ENCODE measurements at regions of chr5 and their contacts with region 1.

Region 1: GRCh38 chr5:149636851-149637246 is 55.6 kb downstream of the ARHGEF37 start:
- DNase-seq: peak; percentile 89
- H3K4me3 ChIP-seq: no peak overlapping the region
- H3K27ac ChIP-seq: no peak overlapping the region
- H3K4me1 ChIP-seq: peaks cover 4% of the 10 kb centered on the region
- H3K27me3 ChIP-seq: no peaks in the 10 kb centered on the region
- CTCF ChIP-seq: peak; percentile 73 to 88 (median 79)
- POLR2A ChIP-seq: no peak

Region 2: DNA sequence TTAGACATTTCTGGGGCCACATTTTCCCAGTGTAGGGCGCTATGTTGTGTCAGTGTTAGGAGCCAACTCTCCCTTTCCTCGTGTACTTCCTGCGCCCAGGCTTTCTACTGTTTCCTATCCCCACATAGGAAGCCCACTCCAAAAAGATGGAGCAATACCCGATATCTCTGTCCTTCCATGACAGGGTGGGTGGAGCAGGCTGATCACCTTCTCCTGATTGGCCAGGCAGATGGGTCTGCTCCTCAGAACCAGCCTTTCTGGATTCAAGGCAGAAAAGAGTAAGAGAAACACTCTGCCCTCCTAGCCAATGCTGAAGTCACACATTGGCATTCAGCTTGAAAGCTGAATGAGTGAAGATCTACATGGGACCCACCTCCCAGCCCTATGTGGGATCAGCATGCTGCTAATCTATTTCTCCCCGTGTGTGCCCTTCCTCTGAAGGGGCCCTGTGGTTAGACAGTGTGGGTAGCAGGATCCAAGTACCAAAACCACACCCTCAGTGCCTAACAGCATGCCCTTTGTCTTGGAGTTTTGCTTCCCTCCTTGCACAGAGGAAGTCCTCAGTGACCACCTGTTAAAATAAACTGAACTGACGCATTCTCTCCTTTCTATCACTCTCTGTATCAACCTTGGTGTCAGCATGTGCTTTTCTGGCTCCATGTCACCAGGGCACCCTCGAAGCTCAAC is 599.2 kb before region 1 on chr5:
- intact Hi-C with region 1: no loop called
- DNase-seq: no peak
- H3K4me3 ChIP-seq: no peak overlapping the region
- H3K27ac ChIP-seq: no peak overlapping the region
- H3K4me1 ChIP-seq: peaks cover 5% of the 10 kb centered on the region
- H3K27me3 ChIP-seq: no peaks in the 10 kb centered on the region
- CTCF ChIP-seq: no peak
- POLR2A ChIP-seq: no peak

Region 3: DNA sequence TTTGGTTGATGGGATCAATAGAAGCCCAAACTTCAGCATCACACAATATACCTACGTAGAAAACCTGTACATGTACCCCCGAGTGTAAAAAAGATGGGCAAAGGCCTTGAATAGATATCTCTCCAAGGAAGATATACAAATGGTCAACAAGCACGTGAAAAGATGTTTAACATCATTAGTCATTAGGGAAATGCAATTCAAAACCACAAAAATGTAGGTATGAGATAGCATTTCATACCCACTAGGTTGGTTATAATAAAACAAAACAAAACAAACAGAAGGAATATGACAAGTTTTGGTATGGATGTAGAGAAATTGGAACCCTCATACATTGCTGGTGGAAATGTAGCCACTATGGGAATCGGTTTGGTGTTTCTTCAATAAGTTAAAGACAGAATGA is 60.2 kb after region 1 on chr5:
- intact Hi-C with region 1: no loop called
- DNase-seq: no peak
- H3K4me3 ChIP-seq: no peak overlapping the region
- H3K27ac ChIP-seq: no peak overlapping the region
- H3K4me1 ChIP-seq: no peaks in the 10 kb centered on the region
- H3K27me3 ChIP-seq: no peaks in the 10 kb centered on the region
- CTCF ChIP-seq: no peak
- POLR2A ChIP-seq: no peak

Region 4: GRCh38 chr5:149749481-149750365 is 112.9 kb after region 1 on chr5:
- intact Hi-C with region 1: no loop called
- DNase-seq: no peak
- H3K4me3 ChIP-seq: no peak overlapping the region
- H3K27ac ChIP-seq: no peak overlapping the region
- H3K4me1 ChIP-seq: no peaks in the 10 kb centered on the region
- H3K27me3 ChIP-seq: no peaks in the 10 kb centered on the region
- CTCF ChIP-seq: no peak
- POLR2A ChIP-seq: no peak

Region 5: DNA sequence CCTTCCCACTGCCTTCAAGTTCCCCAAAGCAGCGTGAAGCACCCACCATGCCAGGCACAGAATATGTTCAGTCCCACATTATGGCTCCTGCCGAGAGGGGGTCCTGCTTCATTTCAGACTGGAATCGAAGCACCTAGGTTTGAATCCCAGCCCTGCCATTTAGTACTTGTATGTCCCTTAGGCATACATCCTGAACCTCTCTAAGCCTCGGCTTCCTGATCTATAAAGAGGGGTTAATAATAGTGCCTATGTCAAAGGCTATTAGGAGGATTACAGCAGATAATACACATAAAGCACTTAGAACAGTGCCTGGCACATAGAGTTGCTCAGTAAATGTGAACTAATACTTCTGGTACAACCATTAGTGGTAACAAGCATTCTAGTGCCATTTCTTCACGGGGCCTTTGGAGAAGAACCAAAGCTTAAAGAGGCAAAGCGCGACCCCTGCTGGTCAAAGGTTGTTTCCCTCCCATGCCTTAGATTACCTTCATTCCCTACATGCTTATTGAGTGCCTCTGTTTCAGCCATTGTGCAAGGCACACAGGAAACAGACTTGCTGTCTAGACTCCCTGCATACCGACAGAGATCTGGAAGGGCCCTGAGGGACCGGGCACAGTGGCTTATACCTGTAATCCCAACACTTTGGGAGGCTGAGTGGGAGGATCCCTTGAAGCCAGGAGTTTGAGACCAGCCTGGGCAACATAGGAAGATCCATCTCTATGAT is 191.5 kb after region 1 on chr5:
- intact Hi-C with region 1: loop called (anchors 5 kb)
- DNase-seq: peak; percentile 93
- H3K4me3 ChIP-seq: no peak overlapping the region
- H3K27ac ChIP-seq: no peak overlapping the region
- H3K4me1 ChIP-seq: peaks cover 15% of the 10 kb centered on the region
- H3K27me3 ChIP-seq: no peaks in the 10 kb centered on the region
- CTCF ChIP-seq: peak; percentile 82 to 88 (median 88)
- POLR2A ChIP-seq: no peak

Region 6: DNA sequence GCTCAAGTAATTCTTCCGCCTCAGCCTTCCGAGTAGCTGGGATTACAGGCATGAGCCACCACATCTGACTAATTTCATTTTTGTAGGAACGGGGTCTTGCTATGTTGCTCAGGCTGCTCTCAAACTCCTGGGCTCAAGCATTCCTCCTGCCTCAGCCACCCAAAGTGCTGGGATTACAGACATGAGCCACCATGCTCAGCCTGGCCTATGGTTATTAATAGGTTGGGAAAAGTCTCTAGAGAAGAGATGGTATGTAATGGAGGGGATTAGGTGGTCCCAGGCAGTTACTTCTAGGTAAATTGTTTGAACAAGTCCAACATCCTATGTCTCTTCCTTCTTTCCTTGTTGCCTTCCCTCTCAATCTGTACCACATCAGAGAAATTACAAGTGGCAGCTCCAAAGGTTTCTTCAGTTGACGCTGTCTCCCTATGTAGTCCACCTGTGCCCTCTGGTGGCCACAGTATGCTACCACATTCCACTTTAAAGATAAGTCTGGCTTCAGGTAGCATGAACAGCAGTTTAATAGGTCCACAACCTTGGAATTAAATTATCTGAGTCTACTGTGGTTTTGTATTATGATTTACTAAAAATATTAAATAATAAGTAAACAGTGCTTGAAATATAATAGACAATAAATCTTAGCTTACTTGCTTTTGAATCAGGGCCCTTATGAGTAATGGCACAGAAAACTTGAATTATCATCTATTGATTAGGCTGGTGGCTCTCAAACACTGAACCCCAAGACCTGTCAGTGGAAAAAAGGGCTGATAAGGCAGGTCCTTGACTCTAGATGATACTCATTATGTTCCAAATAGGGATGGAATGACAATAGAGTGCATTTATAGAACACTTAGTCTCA is 353.9 kb after region 1 on chr5:
- intact Hi-C with region 1: loop called (anchors 10 kb)
- DNase-seq: peak; percentile 86
- H3K4me3 ChIP-seq: no peak overlapping the region
- H3K27ac ChIP-seq: no peak overlapping the region
- H3K4me1 ChIP-seq: no peaks in the 10 kb centered on the region
- H3K27me3 ChIP-seq: no peaks in the 10 kb centered on the region
- CTCF ChIP-seq: peak; percentile 88 to 94 (median 91)
- POLR2A ChIP-seq: no peak